AG04449 (cell line): ENCODE measurements at regions of chr11 and their contacts with region 1.

Region 1: DNA sequence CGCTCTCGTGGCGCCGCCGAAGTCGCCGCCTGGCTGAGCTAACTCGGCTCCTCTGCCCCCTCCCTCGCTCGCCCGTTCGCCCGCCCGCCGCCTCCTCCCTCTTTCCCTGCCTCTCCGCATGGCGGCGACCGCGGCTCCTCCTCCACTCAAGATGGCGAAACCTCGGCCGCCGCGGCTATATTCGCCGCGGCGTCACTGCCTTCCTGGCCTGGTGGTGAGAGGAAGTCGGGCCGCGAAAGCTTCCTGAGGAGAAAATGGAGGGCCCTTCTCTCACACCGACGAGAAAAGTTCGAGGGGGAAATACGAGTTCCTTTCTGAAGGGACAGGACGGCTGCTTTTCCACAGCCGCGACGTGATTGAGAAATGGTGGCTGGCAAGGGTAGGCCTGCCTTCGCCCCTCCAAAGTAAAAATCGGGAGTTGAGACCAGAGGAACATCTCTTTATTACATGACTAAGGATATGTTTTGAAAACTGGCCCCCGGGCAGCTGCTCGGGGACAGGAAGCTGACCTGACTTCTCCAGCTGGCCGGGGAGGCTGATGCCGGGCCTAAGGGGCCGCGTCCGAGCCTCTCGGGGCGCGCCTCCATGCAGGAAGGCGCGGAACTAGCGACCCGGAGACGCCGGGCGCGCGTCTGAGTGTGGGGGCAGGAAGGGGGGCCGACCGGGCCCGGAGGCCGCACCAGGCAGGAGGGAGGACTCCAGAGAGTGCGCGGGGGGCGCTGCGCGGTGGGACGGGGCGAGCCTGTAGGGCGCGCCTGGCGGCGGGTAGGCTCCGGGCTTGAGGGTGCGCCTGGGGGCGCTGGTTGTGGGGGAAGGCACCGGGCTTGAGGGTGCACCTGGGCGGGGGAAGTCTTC is at the start of gene DDX6:
- DNase-seq: no peak
- H3K4me3 ChIP-seq: peak within 1 kb of the TSS; percentile 82
- CTCF ChIP-seq: peak; percentile 67

Region 2: DNA sequence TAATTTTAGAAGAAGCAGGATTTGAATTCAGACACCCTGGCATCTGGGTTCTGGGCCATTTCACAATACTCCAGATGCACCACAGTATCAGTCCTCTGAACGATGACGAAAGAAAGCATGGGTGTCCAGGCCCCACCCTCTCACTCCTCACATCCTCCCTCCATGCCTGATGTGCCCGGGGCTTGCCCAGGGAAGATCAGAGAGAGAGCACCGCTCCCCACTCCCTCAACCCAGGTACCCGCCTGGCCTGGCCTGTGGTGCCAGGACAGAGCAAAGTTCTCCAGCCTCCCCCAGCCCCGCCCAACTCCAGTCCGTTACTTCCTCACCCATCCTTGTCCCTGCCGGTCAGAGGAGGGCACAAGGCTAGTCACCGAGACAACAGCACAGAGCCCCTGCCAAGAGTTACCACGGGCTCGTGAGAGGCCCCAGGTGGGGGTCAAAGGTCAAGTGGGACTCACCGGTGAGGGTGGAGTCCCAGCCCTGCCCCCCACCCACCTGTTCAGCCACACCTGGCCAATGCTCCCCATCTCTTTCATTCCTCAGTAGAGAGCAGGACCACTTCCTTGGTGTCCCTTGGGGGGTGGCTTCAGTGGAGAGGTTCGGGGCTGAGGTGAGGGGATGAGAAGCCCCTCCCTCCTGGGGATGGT is 126.3 kb after region 1 on chr11:
- CTCF ChIA-PET with region 1: interaction called, 3 read pairs
- POLR2A ChIA-PET with region 1: interaction called, 49 read pairs
- DNase-seq: no peak
- H3K4me3 ChIP-seq: peak overlapping the region; percentile 50
- CTCF ChIP-seq: no peak

Region 3: DNA sequence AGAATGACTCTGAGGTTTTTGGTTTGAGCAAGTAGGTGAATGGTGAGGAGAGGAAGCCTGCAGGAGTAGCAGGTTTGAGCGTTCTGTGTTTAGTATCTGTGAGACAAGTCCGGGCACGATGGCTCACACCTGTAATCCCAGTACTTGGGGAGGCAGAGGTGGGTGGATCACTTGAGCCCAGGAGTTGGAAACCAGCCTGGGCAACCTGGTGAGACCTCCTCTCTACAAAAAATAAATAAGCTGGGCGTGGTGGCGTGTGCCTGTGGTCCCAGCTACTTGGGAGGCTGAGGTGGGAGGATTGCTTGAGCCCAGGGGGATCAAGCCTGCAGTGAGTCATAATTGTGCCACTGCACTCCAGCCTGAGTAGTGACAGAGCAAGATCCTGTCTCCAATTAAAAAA is 196.9 kb after region 1 on chr11:
- CTCF ChIA-PET with region 1: no interaction called
- POLR2A ChIA-PET with region 1: no interaction called
- DNase-seq: no peak
- H3K4me3 ChIP-seq: no peak overlapping the region
- CTCF ChIP-seq: no peak